ENCODE measurements at regions of chr19 and their contacts with region 1.

Region 1: GRCh38 chr19:39119554-39120229 is 5.9 kb upstream of the PAK4 start:
- DNase-seq: no peak
- H3K4me3 ChIP-seq: no peak overlapping the region
- H3K27me3 ChIP-seq: no peaks in the 10 kb centered on the region
- CTCF ChIP-seq: no peak

Region 2: DNA sequence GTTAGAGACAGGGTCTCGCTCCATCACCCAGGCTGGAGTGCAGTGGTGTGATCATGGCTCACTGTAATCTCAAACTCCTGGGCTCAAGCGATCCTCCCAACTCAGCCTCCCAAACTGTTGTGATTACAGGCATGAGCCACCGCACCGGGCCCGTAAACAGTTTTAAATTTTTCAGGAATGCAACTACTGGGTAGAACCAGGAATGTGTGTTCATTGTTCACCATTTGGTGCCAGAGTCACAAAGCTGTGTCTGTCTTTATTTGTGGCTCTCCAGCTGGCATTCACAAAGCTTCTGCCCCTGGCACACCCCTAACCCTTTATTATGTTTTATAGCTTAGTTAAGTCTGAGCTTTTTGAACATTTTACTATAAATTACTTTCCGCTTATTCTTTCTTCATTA is 55.3 kb before region 1 on chr19:
- CTCF ChIA-PET with region 1: no interaction called
- POLR2A ChIA-PET with region 1: no interaction called
- DNase-seq: no peak
- H3K4me3 ChIP-seq: no peak overlapping the region
- H3K27me3 ChIP-seq: no peaks in the 10 kb centered on the region
- CTCF ChIP-seq: no peak

Region 3: GRCh38 chr19:39156326-39157230 is 36.9 kb after region 1 on chr19:
- CTCF ChIA-PET with region 1: no interaction called
- POLR2A ChIA-PET with region 1: no interaction called
- DNase-seq: no peak
- H3K4me3 ChIP-seq: no peak overlapping the region
- H3K27me3 ChIP-seq: no peaks in the 10 kb centered on the region
- CTCF ChIP-seq: no peak

Region 4: GRCh38 chr19:39166571-39167391 is 47.1 kb after region 1 on chr19:
- CTCF ChIA-PET with region 1: no interaction called
- POLR2A ChIA-PET with region 1: no interaction called
- DNase-seq: no peak
- H3K4me3 ChIP-seq: no peak overlapping the region
- H3K27me3 ChIP-seq: no peaks in the 10 kb centered on the region
- CTCF ChIP-seq: no peak

Region 5: GRCh38 chr19:39328046-39328705 is 208.5 kb after region 1 on chr19:
- CTCF ChIA-PET with region 1: interaction called, 57 read pairs
- POLR2A ChIA-PET with region 1: no interaction called
- DNase-seq: no peak
- H3K4me3 ChIP-seq: no peak overlapping the region
- H3K27me3 ChIP-seq: peaks cover 1% of the 10 kb centered on the region
- CTCF ChIP-seq: peak; percentile 98

Region 6: GRCh38 chr19:39502640-39503417 is 383.1 kb after region 1 on chr19:
- CTCF ChIA-PET with region 1: no interaction called
- POLR2A ChIA-PET with region 1: no interaction called
- DNase-seq: no peak
- H3K4me3 ChIP-seq: no peak overlapping the region
- H3K27me3 ChIP-seq: peaks cover 24% of the 10 kb centered on the region
- CTCF ChIP-seq: peak; percentile 50